ENCODE measurements at regions of chr13 and their contacts with region 1.

Region 1: GRCh38 chr13:48155848-48156247 is 60.9 kb upstream of the MED4 start:
- DNase-seq: peak; percentile 26
- ATAC-seq: peak; percentile 78
- H3K4me3 Mint-ChIP-seq: peak overlapping the region; percentile 54
- H3K27ac Mint-ChIP-seq: peak overlapping the region; percentile 96
- H3K4me1 Mint-ChIP-seq: peaks cover 87% of the 10 kb centered on the region
- H3K27me3 Mint-ChIP-seq: no peaks in the 10 kb centered on the region

Region 2: DNA sequence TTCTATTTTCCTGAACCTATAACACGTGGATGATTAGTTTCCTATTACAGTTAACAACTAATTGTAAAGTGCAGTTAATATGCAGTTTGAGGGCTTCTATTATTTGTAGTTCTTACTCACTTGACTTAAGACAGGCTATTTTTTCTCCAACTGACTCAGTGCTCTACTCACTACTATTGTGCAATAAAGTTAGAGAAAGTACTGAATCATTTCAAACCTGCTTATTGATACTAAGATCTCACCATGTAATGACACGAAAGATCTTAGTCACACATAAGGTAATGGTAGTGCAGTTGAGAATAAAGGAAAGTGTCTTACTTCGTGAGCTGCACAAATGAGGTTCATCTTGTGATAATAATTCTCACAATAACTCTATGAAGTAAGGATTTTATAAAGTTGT is 54.3 kb after region 1 on chr13:
- CTCF ChIA-PET with region 1: no interaction called
- POLR2A ChIA-PET with region 1: no interaction called
- intact Hi-C with region 1: loop called (anchors 1 to 5 kb)
- DNase-seq: no peak
- ATAC-seq: peak; percentile 96
- H3K4me3 Mint-ChIP-seq: no peak overlapping the region
- H3K27ac Mint-ChIP-seq: no peak overlapping the region
- H3K4me1 Mint-ChIP-seq: peaks cover 24% of the 10 kb centered on the region
- H3K27me3 Mint-ChIP-seq: peaks cover 13% of the 10 kb centered on the region

Region 3: DNA sequence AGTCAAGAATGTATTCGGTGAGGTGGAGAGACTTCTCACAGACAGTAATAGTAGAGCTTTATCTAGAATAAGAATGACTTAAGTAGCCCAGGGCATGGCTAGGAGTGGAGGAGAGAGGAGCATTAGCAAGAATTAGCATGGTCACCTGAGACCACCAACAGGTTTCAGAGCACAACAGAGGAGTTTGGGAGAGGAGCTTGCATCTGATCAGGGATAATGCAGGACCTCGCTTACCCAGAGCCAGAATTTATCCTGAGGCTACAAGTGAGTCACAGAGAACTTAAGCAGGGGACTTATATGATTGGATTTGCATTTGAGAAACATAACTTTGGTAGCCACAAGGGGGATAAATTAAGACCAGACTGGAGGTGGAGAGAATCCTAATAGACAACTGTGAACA is 717.7 kb after region 1 on chr13:
- CTCF ChIA-PET with region 1: no interaction called
- POLR2A ChIA-PET with region 1: no interaction called
- intact Hi-C with region 1: no loop called
- DNase-seq: no peak
- ATAC-seq: no peak
- H3K4me3 Mint-ChIP-seq: no peak overlapping the region
- H3K27ac Mint-ChIP-seq: no peak overlapping the region
- H3K4me1 Mint-ChIP-seq: no peaks in the 10 kb centered on the region
- H3K27me3 Mint-ChIP-seq: peaks cover 11% of the 10 kb centered on the region

Region 4: DNA sequence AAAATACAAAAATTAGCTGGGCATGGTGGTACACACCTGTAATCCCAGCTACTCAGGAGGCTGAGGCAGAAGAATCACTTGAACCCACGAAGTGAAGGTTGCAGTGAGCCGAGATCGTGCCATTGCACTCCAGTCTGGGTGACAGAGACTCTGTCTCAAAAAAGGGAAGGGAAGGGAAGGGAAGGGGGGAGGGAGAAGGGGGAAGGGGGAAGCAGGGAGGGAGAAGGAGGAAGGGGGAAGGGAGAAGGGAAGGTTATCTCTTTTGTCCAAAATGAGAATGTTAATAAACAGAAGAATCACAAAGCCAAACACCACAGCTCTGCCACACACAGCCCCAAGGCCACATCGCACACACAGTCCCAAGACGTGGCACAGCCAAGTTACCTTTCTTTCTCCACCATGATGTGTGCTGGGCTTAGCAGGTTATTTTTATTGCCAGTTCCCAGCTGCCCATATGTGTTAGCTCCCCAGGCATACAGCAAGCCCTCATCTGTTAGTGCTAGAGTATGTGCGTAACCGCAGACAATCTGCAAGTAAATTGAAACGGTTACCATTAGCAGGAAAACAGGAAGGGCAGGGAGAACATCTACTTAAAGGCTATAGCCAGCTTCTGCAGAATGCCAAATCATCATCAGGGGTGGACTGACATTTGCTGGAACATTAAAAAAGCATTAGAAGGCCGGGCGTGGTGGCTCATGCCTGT is 1395.2 kb after region 1 on chr13:
- CTCF ChIA-PET with region 1: no interaction called
- POLR2A ChIA-PET with region 1: no interaction called
- intact Hi-C with region 1: no loop called
- DNase-seq: no peak
- ATAC-seq: no peak
- H3K4me3 Mint-ChIP-seq: no peak overlapping the region
- H3K27ac Mint-ChIP-seq: no peak overlapping the region
- H3K4me1 Mint-ChIP-seq: no peaks in the 10 kb centered on the region
- H3K27me3 Mint-ChIP-seq: no peaks in the 10 kb centered on the region